PC-3 (cell line): ENCODE measurements at regions of chr1 and their contacts with region 1.

Region 1: GRCh38 chr1:215845234-215845891 is 278.3 kb downstream of the KCTD3 start:
- DNase-seq: peak; percentile 94
- ATAC-seq: peak; percentile 96
- H3K4me3 ChIP-seq: peak overlapping the region; percentile 29
- H3K27ac ChIP-seq: peak overlapping the region; percentile 26
- H3K4me1 ChIP-seq: peaks cover 20% of the 10 kb centered on the region
- H3K27me3 ChIP-seq: no peaks in the 10 kb centered on the region
- CTCF ChIP-seq: no peak

Region 2: GRCh38 chr1:215710036-215710898 is 135.1 kb before region 1 on chr1:
- CTCF ChIA-PET with region 1: no interaction called
- POLR2A ChIA-PET with region 1: no interaction called
- intact Hi-C with region 1: no loop called
- DNase-seq: peak; percentile 93
- ATAC-seq: peak; percentile 70
- H3K4me3 ChIP-seq: no peak overlapping the region
- H3K27ac ChIP-seq: no peak overlapping the region
- H3K4me1 ChIP-seq: 0 out of 2 replicates have a peak, but pooled peaks cover 3% of the 10 kb centered on the region
- H3K27me3 ChIP-seq: peaks cover 27% of the 10 kb centered on the region
- CTCF ChIP-seq: peak; percentile 99

Region 3: DNA sequence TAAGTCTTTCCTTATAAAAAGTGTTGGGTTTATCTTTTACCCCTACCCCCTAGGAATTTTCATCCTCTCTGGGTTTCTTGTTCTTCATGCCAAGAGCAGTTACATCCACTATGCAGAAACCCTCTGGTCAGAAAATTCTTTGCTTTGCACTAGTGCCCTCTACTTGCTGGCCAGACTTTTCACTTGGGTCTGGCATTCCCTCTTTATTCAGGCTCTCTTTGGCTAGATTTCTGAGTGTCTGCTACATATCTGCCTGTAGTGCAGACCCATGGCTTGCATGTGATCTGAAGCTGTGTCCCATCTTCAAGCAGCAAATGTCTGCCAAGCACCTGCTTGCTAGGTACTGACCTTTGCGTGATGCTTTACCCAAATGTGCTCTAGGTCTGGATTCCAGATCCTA is 1548.5 kb after region 1 on chr1:
- CTCF ChIA-PET with region 1: interaction called, 18 read pairs
- POLR2A ChIA-PET with region 1: no interaction called
- intact Hi-C with region 1: no loop called
- DNase-seq: peak; percentile 52
- ATAC-seq: peak; percentile 86
- H3K4me3 ChIP-seq: no peak overlapping the region
- H3K27ac ChIP-seq: no peak overlapping the region
- H3K4me1 ChIP-seq: no peaks in the 10 kb centered on the region
- H3K27me3 ChIP-seq: no peaks in the 10 kb centered on the region
- CTCF ChIP-seq: peak; percentile 56